ENCODE measurements at regions of chr13 and their contacts with region 1.

Region 1: DNA sequence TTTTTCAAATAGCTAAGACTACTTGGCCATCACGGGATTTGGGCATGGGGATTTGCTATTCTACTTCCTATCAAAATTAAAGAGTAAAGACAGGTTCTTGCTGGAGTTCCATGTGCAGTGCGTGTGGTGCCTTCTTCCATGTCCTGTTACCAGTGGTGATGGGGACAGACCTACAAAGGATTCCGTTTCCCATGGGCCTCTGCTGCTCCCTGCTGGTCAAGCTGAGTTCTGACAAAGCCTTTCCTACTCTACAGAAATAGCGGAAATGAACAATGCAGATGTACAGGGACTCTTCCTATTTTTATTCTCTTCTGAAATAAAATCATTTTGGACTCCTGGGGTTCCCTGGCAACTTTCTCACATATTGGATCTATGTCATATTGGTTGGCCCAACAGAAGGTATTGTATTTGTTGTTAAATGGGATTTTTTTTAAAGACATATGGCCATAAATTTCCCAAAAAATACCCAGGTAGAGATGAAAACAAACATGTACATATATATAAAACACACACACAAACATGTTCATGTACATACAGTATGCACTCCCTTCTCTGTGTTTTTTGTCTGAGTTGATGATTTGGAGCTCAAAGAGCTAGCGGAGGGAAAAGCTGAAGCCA is 90.5 kb upstream of the SLC15A1 start:
- ATAC-seq: peak; percentile 63 to 87 (median 75)
- H3K4me3 ChIP-seq: no peak overlapping the region
- H3K27ac ChIP-seq: no peak overlapping the region
- H3K4me1 ChIP-seq: peaks cover 4% of the 10 kb centered on the region in 2 donors

Region 2: GRCh38 chr13:98466634-98467236 is 376.2 kb before region 1 on chr13:
- in situ Hi-C with region 1: loop called in 2 of 9 experiments (anchors 25 kb)
- ATAC-seq: peak in 4 of 8 experiments; percentile 55 to 90 (median 74)
- H3K4me3 ChIP-seq: no peak overlapping the region
- H3K27ac ChIP-seq: no peak overlapping the region
- H3K4me1 ChIP-seq: no peaks in the 10 kb centered on the region

Region 3: DNA sequence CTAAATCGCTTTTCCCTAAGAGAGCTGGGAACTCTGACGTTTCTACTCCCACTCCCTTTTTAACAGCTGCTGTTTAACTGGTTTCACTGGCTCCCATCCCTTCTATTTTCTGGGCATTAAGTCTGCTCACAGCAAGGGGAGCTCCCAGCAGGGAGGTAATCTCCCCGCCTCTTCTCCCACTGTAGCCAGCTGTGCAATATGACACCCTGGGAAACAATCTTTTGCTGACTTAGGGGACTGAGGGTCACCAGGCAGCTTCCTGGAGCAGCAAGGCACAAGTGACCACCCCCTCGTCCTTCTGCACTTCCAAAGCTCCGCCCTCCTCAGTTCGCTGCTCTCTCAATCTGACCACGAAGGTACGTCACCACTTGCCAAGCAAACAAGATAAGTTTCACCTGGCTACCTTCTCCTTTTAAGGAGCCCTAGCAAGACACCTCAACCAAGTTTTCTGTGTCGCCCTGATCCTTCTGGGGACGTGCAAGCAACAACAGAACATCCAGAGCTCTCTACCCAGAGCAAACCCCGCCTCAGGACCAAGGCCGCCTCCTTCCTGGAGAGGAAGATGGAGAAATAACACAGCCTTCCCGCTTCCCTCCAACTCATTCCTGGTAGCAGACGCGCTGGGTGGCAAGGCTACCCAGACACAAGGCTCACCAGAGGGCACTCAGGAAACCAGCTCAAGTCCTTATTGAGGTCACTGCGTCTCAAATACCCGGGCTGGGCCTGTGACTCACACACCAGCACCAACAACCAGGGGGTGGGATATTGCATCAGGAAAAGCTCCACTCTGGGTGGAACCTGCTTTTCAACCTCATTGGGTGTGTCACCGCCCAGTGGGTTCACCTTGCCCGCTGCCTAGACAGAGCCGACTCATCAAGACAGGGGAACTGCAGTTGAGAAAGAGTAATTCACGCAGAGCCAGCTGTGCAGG is 358.4 kb before region 1 on chr13:
- in situ Hi-C with region 1: loop called in 1 of 9 experiments (anchors 25 kb)
- ATAC-seq: peak; percentile 41 to 77 (median 66)
- H3K4me3 ChIP-seq: no peak overlapping the region
- H3K27ac ChIP-seq: peak overlapping the region in 1 of 2 donors; percentile 39
- H3K4me1 ChIP-seq: peaks cover 36 to 46% of the 10 kb centered on the region in 2 donors

Measured in motor neuron (in vitro differentiated cells).